ENCODE measurements at regions of chr10 and their contacts with region 1.

Region 1: DNA sequence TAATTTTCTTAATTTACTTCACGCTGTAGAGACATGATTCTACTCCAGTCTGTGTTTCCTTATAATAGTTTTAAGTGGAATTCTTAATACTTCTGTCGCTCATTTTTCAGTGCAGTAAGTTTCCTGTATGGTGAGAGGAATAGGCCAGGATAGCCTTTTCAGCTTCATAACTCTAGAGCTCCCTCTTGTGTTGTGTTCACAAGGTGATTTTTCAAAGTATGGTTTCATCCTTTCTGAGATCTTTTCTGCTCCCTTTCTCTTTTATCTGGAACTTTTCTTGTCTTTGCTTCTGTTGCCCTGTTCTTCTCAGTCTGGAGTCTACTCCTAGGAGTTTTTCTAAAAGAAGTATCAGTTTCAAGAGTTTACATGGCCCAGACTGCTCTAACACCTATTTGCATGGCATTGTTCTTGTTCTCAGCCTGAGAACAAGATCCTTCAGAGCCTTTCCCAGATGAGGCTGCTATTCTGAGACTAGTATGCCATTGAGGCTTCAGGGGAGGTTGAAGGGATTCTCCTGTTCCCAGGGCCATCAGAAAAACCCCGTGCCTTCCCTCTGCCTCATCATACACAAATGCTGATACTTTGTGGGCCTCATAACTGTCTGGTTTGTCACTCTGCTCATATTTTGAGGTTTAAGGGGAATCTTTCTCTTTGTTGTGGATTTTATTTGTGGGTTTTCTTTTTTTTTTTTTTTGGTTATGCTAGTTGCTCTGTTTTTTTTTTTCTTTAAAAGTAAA is 21.8 kb downstream of the NET1 start:
- DNase-seq: no peak
- ATAC-seq: peak; percentile 63
- H3K4me3 Mint-ChIP-seq: no peak overlapping the region
- H3K27ac Mint-ChIP-seq: no peak overlapping the region
- H3K4me1 Mint-ChIP-seq: peaks cover 15% of the 10 kb centered on the region
- H3K27me3 Mint-ChIP-seq: no peaks in the 10 kb centered on the region

Region 2: GRCh38 chr10:4813023-4813422 is 621.2 kb before region 1 on chr10:
- CTCF ChIA-PET with region 1: interaction called, 15 read pairs
- DNase-seq: no peak
- ATAC-seq: no peak
- H3K4me3 Mint-ChIP-seq: no peak overlapping the region
- H3K27ac Mint-ChIP-seq: no peak overlapping the region
- H3K4me1 Mint-ChIP-seq: no peaks in the 10 kb centered on the region
- H3K27me3 Mint-ChIP-seq: peaks cover 11% of the 10 kb centered on the region

Region 3: GRCh38 chr10:5423771-5424170 is 10.4 kb before region 1 on chr10:
- CTCF ChIA-PET with region 1: interaction called, 22 read pairs
- DNase-seq: no peak
- ATAC-seq: no peak
- H3K4me3 Mint-ChIP-seq: no peak overlapping the region
- H3K27ac Mint-ChIP-seq: no peak overlapping the region
- H3K4me1 Mint-ChIP-seq: peaks cover 2% of the 10 kb centered on the region
- H3K27me3 Mint-ChIP-seq: no peaks in the 10 kb centered on the region

Region 4: DNA sequence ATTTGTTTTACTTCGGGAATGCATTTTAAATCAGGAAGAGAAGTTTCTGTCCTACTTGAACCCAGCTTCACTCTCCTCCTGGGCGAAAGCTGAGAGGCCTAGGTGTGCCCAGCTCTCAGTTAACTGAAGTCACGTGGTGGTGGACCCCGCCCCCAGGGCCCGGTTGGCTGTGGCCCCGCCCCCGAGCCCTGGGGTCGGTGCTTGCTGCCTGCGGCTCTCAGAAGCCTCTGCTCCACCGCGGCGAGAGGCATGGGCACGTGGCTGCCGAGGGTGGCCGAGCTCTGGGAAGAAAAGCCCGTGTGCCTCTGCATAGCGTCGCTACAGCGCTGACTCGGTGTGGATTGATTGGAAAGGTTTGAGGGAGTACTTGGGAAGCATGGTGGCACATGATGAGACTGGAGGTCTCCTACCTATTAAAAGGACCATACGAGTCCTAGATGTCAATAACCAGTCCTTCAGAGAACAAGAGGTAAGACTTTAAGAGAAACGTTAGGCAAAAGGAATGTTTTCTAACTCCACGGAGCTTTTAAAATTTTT is 12.3 kb after region 1 on chr10:
- CTCF ChIA-PET with region 1: interaction called, 18 read pairs
- DNase-seq: peak; percentile 82
- ATAC-seq: peak; percentile 46
- H3K4me3 Mint-ChIP-seq: peak overlapping the region; percentile 80
- H3K27ac Mint-ChIP-seq: peak overlapping the region; percentile 77
- H3K4me1 Mint-ChIP-seq: peaks cover 69% of the 10 kb centered on the region
- H3K27me3 Mint-ChIP-seq: no peaks in the 10 kb centered on the region

Region 5: GRCh38 chr10:5629303-5630111 is 195.3 kb after region 1 on chr10:
- CTCF ChIA-PET with region 1: interaction called, 189 read pairs
- DNase-seq: peak; percentile 91
- ATAC-seq: peak; percentile 74
- H3K4me3 Mint-ChIP-seq: peak overlapping the region; percentile 32
- H3K27ac Mint-ChIP-seq: peak overlapping the region; percentile 69
- H3K4me1 Mint-ChIP-seq: peaks cover 38% of the 10 kb centered on the region
- H3K27me3 Mint-ChIP-seq: peaks cover 25% of the 10 kb centered on the region

Region 6: DNA sequence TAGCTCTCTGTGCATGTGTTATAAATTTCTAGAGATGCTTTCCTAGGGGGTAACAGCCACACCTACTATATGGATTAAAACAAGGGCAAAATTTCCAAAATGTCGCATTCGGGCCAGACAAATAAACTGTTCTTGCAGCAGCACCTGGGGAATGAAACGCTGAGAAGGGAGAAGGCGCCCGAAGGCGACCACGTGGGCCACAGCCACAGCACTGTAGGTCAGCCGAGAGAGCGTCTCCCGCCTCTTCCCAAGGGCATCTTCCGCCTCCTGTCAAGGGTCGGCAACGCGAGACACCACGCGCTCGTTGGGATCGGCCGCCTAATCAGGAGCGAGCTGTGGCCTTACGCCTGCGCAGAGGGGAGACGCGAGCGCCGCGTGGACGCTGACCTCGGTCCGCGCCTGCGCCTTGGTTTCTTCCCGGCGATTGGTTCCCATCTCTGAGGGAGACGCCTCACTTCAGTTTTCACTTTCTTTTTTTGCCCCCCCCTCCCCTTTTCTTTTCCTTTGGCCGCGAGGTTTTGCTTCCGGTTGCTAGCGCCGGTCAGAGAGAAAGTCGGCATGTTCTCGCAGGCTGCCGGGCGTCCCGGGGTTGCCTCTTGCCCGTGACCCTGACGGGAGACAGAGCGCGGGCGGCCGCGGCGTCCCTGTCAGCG is 250.3 kb after region 1 on chr10 and contains the start of gene TASOR2:
- CTCF ChIA-PET with region 1: no interaction called
- DNase-seq: peak; percentile 98
- ATAC-seq: peak; percentile 86
- H3K4me3 Mint-ChIP-seq: peak within 1 kb of the TSS; percentile 99
- H3K27ac Mint-ChIP-seq: peak within 1 kb of the TSS; percentile 95
- H3K4me1 Mint-ChIP-seq: peaks cover 56% of the 10 kb centered on the region
- H3K27me3 Mint-ChIP-seq: peaks cover 10% of the 10 kb centered on the region
- total RNA-seq, gene TASOR2: 52.0 to 56.0 TPM

Measured in activated CD8-positive, alpha-beta memory T cell treated with anti-CD3 and anti-CD28 coated beads, Interleukin-2, amount 10 ng/mL, durations not matched to agents 7 days and 5 days (primary cell).